Left lung (tissue), 14 donors: ENCODE measurements at regions of chr2 and their contacts with region 1.

Region 1: DNA sequence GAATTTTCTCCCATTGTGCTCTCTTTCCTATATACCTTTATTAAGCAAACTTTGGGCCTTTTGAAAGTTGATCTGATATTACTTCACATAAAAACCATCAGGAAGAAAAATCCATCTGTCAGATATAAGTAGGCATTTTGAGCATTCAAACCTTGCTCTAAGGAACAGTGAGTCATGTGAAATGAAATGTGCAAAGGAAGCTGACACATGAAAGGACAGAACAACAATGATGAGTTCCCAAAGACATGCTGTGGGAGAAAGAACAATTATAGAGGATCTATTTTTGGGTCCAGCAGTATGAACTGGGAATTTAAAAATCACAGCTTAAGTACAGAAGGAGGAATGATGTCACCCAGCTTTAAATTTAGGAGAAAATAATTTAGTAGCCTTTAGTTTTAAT is 18.1 kb downstream of the CALCRL start:
- DNase-seq: no peak
- ATAC-seq: no peak
- H3K4me3 ChIP-seq: no peak overlapping the region
- H3K27ac ChIP-seq: no peak overlapping the region
- H3K4me1 ChIP-seq: peaks cover 0 to 6% of the 10 kb centered on the region in 2 donors
- H3K27me3 ChIP-seq: no peaks in the 10 kb centered on the region
- CTCF ChIP-seq: no peak

Region 2: DNA sequence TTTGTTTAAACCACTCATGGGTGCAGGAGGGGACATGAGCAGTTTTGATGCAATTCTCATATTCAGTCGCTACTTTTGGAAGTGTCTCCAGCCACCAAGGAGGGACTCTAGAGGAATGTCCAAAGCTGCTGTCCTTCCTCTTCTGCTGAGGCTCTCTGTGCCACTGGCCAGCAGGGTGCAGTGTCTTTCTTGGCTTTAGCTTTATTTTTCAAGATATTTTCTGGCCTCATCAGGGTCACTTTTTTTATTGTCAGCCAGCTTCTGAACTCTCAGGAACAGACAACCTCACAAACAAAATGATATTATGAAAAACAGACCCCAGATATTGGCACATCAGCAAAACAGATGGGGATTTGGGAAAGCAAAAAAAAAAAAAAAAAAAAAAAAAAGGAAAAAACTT is 291.7 kb before region 1 on chr2:
- intact Hi-C with region 1: loop called in 1 of 2 experiments (anchors 10 kb)
- DNase-seq: peak in 2 of 4 donors; percentile 15 to 38
- ATAC-seq: peak; percentile 60
- H3K4me3 ChIP-seq: no peak overlapping the region
- H3K27ac ChIP-seq: no peak overlapping the region
- H3K4me1 ChIP-seq: no peaks in the 10 kb centered on the region
- H3K27me3 ChIP-seq: no peaks in the 10 kb centered on the region
- CTCF ChIP-seq: peak; percentile 19 to 25